Activated B cell treated with CpG ODN at 0.5 μM for 24 hours (primary cell): ENCODE measurements at regions of chr12 and their contacts with region 1.

Region 1: GRCh38 chr12:132887513-132888351 is at the start of gene CHFR:
- DNase-seq: peak; percentile 90
- ATAC-seq: peak; percentile 98
- H3K4me3 Mint-ChIP-seq: peak within 1 kb of the TSS; percentile 98
- H3K27ac Mint-ChIP-seq: peak within 1 kb of the TSS; percentile 100
- H3K4me1 Mint-ChIP-seq: peaks cover 24% of the 10 kb centered on the region
- H3K27me3 Mint-ChIP-seq: peaks cover 7% of the 10 kb centered on the region
- CTCF ChIP-seq: no peak
- total RNA-seq, gene CHFR: 89.4 and 108 TPM in 2 replicates

Region 2: GRCh38 chr12:132710422-132711168 is 177.1 kb before region 1 on chr12 and contains the start of gene PGAM5:
- CTCF ChIA-PET with region 1: no interaction called
- POLR2A ChIA-PET with region 1: interaction called, 3 read pairs
- intact Hi-C with region 1: loop called (anchors 1 kb)
- DNase-seq: peak; percentile 96
- ATAC-seq: peak; percentile 93
- H3K4me3 Mint-ChIP-seq: peak within 1 kb of the TSS; percentile 92
- H3K27ac Mint-ChIP-seq: peak within 1 kb of the TSS; percentile 95
- H3K4me1 Mint-ChIP-seq: peaks cover 33% of the 10 kb centered on the region
- H3K27me3 Mint-ChIP-seq: no peaks in the 10 kb centered on the region
- CTCF ChIP-seq: no peak
- total RNA-seq, gene PGAM5: 44.0 and 48.7 TPM in 2 replicates

Region 3: DNA sequence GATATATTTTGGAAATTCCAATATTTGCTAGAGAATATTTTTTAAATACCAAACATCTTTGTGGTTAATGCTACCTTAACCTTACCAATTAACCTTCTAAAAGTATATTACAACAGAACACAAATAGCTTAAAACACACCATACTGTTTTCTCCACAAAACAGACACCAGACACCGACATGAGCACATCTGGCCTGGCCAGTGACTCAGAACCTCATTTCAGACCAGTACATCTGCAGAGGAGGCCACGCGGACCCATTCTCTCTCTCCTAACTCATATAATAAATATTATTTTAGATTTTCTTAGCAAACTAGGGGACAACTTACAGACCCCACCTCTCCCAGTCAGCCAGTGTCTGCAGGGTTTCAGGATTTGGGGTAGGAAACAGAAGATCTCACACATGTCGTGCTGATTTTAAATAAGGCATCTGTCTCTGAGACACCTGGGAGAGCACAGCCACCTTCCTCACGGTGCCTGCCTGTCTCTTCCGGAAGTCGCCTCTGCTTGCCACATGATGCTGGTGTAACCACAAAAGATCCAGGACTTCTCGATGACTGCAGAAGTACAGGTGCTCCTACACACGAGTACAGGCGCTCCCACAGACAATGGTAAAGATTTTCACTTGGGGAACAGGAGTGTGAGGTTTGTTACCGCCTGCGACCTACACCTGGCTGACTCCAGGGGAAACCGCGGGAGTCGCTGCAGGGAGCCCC is 116.5 kb before region 1 on chr12:
- CTCF ChIA-PET with region 1: no interaction called
- POLR2A ChIA-PET with region 1: interaction called, 10 read pairs
- intact Hi-C with region 1: loop called (anchors 5 kb)
- DNase-seq: peak; percentile 38
- ATAC-seq: peak; percentile 49
- H3K4me3 Mint-ChIP-seq: peak overlapping the region; percentile 62
- H3K27ac Mint-ChIP-seq: peak overlapping the region; percentile 94
- H3K4me1 Mint-ChIP-seq: peaks cover 68% of the 10 kb centered on the region
- H3K27me3 Mint-ChIP-seq: no peaks in the 10 kb centered on the region
- CTCF ChIP-seq: no peak

Region 4: GRCh38 chr12:132908145-132909044 is 20.7 kb after region 1 on chr12:
- CTCF ChIA-PET with region 1: interaction called, 3 read pairs
- POLR2A ChIA-PET with region 1: interaction called, 16 read pairs
- intact Hi-C with region 1: loop called (anchors 1 kb)
- DNase-seq: peak; percentile 91
- ATAC-seq: peak; percentile 90
- H3K4me3 Mint-ChIP-seq: peak overlapping the region; percentile 94
- H3K27ac Mint-ChIP-seq: peak overlapping the region; percentile 96
- H3K4me1 Mint-ChIP-seq: peaks cover 13% of the 10 kb centered on the region
- H3K27me3 Mint-ChIP-seq: peaks cover 2% of the 10 kb centered on the region
- CTCF ChIP-seq: no peak

Region 5: DNA sequence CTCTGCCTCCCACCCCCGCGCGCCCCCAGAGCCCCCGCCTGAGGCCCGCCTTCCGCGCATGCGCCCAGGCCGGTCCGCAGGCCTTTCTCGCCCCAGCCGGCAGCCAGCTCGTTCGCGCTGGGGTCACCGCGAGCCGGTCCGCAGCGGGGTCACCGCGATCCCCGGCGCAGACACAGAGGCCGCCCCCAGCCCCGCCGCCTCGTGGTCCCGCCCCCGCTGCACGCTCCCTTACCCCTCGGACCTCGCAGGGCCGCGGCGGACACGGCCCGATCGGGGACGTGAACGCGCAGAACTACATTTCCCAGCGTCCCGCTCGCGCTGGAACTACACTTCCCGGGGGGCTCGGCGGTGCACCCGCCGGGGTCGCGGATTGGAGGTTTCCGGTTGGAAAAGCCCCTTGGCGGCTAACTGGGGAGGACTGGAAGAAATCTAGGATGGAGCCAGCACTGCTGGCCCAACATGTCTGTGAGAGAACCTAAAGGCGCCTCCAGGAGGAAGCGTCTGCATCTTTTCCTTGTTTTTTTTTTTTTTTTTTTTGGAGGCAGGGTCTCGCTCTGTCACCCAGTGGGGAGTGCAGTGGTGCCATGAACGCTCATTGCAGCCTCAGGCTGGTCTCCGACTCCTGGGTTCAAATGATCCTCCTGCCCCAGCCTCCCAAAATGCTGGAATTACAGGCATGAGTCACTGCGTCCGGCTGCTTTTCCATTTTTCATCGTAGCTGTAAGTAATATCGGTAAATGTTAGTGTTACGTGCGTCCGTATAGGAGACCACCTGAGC is 68.5 kb after region 1 on chr12 and contains the start of gene ZNF605:
- CTCF ChIA-PET with region 1: no interaction called
- POLR2A ChIA-PET with region 1: interaction called, 4 read pairs
- intact Hi-C with region 1: loop called (anchors 1 kb)
- DNase-seq: peak; percentile 87
- ATAC-seq: peak; percentile 89
- H3K4me3 Mint-ChIP-seq: peak within 1 kb of the TSS; percentile 96
- H3K27ac Mint-ChIP-seq: peak within 1 kb of the TSS; percentile 93
- H3K4me1 Mint-ChIP-seq: peaks cover 33% of the 10 kb centered on the region
- H3K27me3 Mint-ChIP-seq: no peaks in the 10 kb centered on the region
- CTCF ChIP-seq: no peak
- total RNA-seq, gene ZNF605: 12.2 and 15.4 TPM in 2 replicates

Region 6: DNA sequence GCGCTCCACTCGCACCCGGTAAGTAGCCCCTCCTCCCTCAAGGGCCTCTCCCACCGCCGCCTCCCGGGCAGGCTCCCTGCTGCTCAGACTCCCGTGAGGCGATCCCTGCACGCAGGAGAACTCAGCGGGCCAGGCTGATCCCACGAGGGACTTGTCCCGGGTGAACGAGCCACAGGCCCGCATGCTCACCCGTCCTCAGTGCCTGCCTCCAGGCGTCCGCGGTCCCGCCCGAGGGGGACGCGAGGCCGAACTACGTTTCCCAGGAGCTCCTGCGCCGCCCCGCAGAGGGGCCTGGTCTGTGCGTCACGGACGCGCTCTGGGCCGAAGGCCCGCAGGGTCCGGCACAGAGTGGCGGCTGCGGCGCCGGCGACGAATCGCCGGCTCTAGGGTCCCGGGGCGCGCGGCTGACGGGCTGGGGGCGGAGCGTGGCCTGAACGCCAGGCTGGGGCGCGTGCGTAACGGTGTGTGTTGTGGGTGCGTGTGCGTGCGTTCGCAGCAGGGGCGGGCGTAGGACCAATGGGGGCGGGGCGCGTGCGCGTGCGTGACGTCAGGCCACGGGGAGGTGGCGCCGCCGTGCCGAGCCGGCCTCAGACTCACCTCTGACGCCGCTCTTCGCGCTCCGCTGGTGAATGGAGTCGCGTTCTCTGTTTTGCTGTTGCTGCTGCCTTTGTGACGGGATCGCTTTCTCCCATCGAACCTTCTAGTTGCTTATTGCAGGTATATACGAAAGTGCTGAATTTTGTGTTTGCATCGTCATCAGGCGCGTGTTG is 242.5 kb after region 1 on chr12 and contains the starts of genes ZNF10 and ZNF891:
- CTCF ChIA-PET with region 1: no interaction called
- POLR2A ChIA-PET with region 1: interaction called, 4 read pairs
- intact Hi-C with region 1: loop called (anchors 1 kb)
- DNase-seq: peak; percentile 99
- ATAC-seq: peak; percentile 86
- H3K4me3 Mint-ChIP-seq: peak within 1 kb of the TSS; percentile 95
- H3K27ac Mint-ChIP-seq: peak within 1 kb of the TSS; percentile 98
- H3K4me1 Mint-ChIP-seq: peaks cover 21% of the 10 kb centered on the region
- H3K27me3 Mint-ChIP-seq: no peaks in the 10 kb centered on the region
- CTCF ChIP-seq: no peak
- total RNA-seq, gene ZNF10: 8.4 and 10.9 TPM in 2 replicates
- total RNA-seq, gene ZNF891: 2.9 and 4.0 TPM in 2 replicates

Region 7: GRCh38 chr12:133190176-133190575 is 302.4 kb after region 1 on chr12:
- CTCF ChIA-PET with region 1: no interaction called
- POLR2A ChIA-PET with region 1: no interaction called
- intact Hi-C with region 1: no loop called
- DNase-seq: no peak
- ATAC-seq: no peak
- H3K4me3 Mint-ChIP-seq: no peak overlapping the region
- H3K27ac Mint-ChIP-seq: no peak overlapping the region
- H3K4me1 Mint-ChIP-seq: peaks cover 4% of the 10 kb centered on the region
- H3K27me3 Mint-ChIP-seq: no peaks in the 10 kb centered on the region
- CTCF ChIP-seq: no peak

Region 8: GRCh38 chr12:133264173-133264572 is 376.4 kb after region 1 on chr12:
- CTCF ChIA-PET with region 1: no interaction called
- POLR2A ChIA-PET with region 1: no interaction called
- intact Hi-C with region 1: no loop called
- DNase-seq: no peak
- ATAC-seq: no peak
- H3K4me3 Mint-ChIP-seq: no peak overlapping the region
- H3K27ac Mint-ChIP-seq: no peak overlapping the region
- H3K4me1 Mint-ChIP-seq: no peaks in the 10 kb centered on the region
- H3K27me3 Mint-ChIP-seq: no peaks in the 10 kb centered on the region
- CTCF ChIP-seq: no peak